ENCODE measurements at regions of chr6 and their contacts with region 1.

Region 1: GRCh38 chr6:43506667-43507471 is 3.3 kb downstream of the LRRC73 start:
- DNase-seq: peak; percentile 64 to 89 (median 80)
- ATAC-seq: peak; percentile 74
- H3K4me3 ChIP-seq: no peak overlapping the region
- H3K4me3 Mint-ChIP-seq: no peak overlapping the region
- H3K27ac ChIP-seq: no peak overlapping the region
- H3K27ac Mint-ChIP-seq: peak overlapping the region; percentile 18
- H3K4me1 ChIP-seq: peaks cover 14% of the 10 kb centered on the region
- H3K4me1 Mint-ChIP-seq: peaks cover 14% of the 10 kb centered on the region
- H3K27me3 ChIP-seq: peaks cover 0 to 13% of the 10 kb centered on the region in 2 experiments
- H3K27me3 Mint-ChIP-seq: peaks cover 16% of the 10 kb centered on the region
- CTCF ChIP-seq: peak; percentile 87

Region 2: DNA sequence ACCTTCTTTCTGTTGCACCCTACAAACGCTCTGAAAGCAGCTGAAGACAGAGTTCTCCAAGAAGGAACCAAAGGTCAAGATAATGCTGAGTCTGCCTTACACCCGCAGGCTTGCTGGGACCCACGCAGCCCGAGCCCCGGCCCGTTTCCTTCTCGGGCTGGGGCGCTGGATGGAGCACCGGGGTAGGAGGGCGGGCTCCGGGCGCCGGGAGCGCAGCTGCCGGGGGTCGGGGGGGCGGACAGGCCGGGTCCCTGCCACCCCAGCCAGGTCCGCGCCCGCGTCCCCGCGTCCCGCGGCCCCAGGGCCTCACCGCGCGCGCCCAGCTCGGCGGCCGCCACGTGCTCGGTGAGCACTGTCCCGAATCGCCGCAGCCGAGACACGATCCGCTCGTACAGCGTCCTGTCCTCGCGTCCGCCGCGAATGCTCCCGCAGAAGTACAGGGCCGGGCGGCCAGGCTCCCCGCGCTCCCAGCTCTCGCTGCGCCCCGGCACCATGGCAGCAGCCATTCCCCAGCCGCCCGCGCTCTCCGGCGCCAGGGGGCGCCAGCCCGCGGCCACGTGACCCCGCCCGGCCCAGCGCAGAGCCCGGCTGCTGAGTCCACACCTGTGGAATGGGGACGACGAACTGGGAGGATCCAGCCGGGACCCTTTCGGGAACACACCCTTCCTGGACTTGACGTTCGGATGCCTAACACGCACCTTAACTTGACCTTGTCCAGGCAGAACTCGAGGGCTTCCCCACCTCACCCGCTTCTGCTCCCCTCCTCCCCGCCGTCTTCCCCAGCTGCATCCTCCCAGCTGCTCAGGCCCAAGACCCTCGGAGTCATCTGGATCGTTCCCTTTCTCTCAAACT is 277.7 kb before region 1 on chr6 and contains the start of gene DNPH1:
- CTCF ChIA-PET with region 1: interaction called, 22 read pairs
- POLR2A ChIA-PET with region 1: interaction called, 3 read pairs
- intact Hi-C with region 1: no loop called
- DNase-seq: peak; percentile 62 to 90 (median 79)
- ATAC-seq: peak; percentile 62
- H3K4me3 ChIP-seq: peak within 1 kb of the TSS; percentile 48 to 69
- H3K4me3 Mint-ChIP-seq: peak within 1 kb of the TSS; percentile 87
- H3K27ac ChIP-seq: peak within 1 kb of the TSS; percentile 49 to 60
- H3K27ac Mint-ChIP-seq: peak within 1 kb of the TSS; percentile 94
- H3K4me1 ChIP-seq: peaks cover 43% of the 10 kb centered on the region
- H3K4me1 Mint-ChIP-seq: peaks cover 40% of the 10 kb centered on the region
- H3K27me3 ChIP-seq: no peaks in the 10 kb centered on the region
- H3K27me3 Mint-ChIP-seq: no peaks in the 10 kb centered on the region
- CTCF ChIP-seq: peak; percentile 92
- total RNA-seq, gene DNPH1: 19.6 to 26.8 TPM

Region 3: DNA sequence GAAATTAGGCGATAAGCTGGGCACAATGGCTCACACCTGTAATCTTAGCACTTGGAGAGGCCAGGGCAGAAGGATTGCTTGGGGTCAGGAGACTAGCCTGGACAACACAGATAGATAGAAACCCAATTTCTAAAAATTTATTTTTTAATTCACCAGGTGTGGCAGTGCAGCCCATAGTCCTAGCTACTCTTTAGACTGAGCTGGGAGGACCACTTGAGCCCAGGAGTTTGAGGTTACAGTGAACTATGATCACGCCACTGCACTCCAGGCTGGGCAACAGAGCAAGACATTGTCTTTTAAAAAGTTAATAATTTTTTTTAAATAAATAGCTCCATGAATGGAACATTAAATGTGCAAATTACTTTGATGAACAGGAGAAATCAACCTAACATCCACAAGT is 145.6 kb before region 1 on chr6:
- CTCF ChIA-PET with region 1: interaction called, 12 read pairs
- POLR2A ChIA-PET with region 1: no interaction called
- intact Hi-C with region 1: loop called in 1 of 2 experiments (anchors 2 kb)
- DNase-seq: peak in 1 of 9 experiments; percentile 30
- ATAC-seq: peak; percentile 48
- H3K4me3 ChIP-seq: no peak overlapping the region
- H3K4me3 Mint-ChIP-seq: no peak overlapping the region
- H3K27ac ChIP-seq: no peak overlapping the region
- H3K27ac Mint-ChIP-seq: no peak overlapping the region
- H3K4me1 ChIP-seq: peaks cover 3% of the 10 kb centered on the region
- H3K4me1 Mint-ChIP-seq: peaks cover 30% of the 10 kb centered on the region
- H3K27me3 ChIP-seq: no peaks in the 10 kb centered on the region
- H3K27me3 Mint-ChIP-seq: no peaks in the 10 kb centered on the region
- CTCF ChIP-seq: no peak

Region 4: GRCh38 chr6:43454696-43455530 is 52.0 kb before region 1 on chr6:
- CTCF ChIA-PET with region 1: interaction called, 57 read pairs
- POLR2A ChIA-PET with region 1: interaction called, 5 read pairs
- intact Hi-C with region 1: loop called (anchors 1 kb)
- DNase-seq: peak in 7 of 9 experiments; percentile 17 to 69 (median 39)
- ATAC-seq: peak; percentile 51
- H3K4me3 ChIP-seq: peak overlapping the region; percentile 57 to 73
- H3K4me3 Mint-ChIP-seq: peak overlapping the region; percentile 82
- H3K27ac ChIP-seq: no peak overlapping the region
- H3K27ac Mint-ChIP-seq: peak overlapping the region; percentile 41
- H3K4me1 ChIP-seq: peaks cover 7% of the 10 kb centered on the region
- H3K4me1 Mint-ChIP-seq: peaks cover 15% of the 10 kb centered on the region
- H3K27me3 ChIP-seq: no peaks in the 10 kb centered on the region
- H3K27me3 Mint-ChIP-seq: no peaks in the 10 kb centered on the region
- CTCF ChIP-seq: peak; percentile 41

Region 5: GRCh38 chr6:43489277-43490072 is 17.4 kb before region 1 on chr6:
- CTCF ChIA-PET with region 1: interaction called, 58 read pairs
- POLR2A ChIA-PET with region 1: no interaction called
- intact Hi-C with region 1: no loop called
- DNase-seq: no peak
- ATAC-seq: no peak
- H3K4me3 ChIP-seq: no peak overlapping the region
- H3K4me3 Mint-ChIP-seq: no peak overlapping the region
- H3K27ac ChIP-seq: no peak overlapping the region
- H3K27ac Mint-ChIP-seq: no peak overlapping the region
- H3K4me1 ChIP-seq: no peaks in the 10 kb centered on the region
- H3K4me1 Mint-ChIP-seq: peaks cover 26% of the 10 kb centered on the region
- H3K27me3 ChIP-seq: no peaks in the 10 kb centered on the region
- H3K27me3 Mint-ChIP-seq: no peaks in the 10 kb centered on the region
- CTCF ChIP-seq: no peak

Region 6: DNA sequence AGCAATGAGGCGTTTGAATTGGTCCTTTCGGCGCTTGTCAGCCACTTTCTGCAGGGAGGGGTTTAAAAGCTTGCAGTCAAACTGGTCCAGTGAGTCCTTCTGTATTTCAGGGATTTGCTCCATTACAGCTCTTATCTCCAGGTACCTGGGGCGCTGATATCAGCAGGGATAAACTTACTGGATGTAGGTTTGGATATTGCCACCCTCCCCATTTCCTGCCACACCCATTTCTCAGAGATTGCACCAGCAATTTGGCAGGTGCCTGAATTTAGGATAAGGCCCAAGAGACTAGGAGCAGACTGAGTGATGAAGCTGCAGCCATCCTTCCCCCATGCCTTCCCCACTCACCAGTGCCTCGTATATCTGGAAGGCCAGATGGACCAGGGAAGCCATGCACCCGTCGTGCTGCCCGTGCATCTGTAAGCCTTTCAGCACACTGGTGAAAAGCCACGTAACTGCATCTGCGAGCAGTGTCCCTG is 17.7 kb after region 1 on chr6:
- CTCF ChIA-PET with region 1: interaction called, 10 read pairs
- POLR2A ChIA-PET with region 1: no interaction called
- intact Hi-C with region 1: no loop called
- DNase-seq: no peak
- ATAC-seq: no peak
- H3K4me3 ChIP-seq: no peak overlapping the region
- H3K4me3 Mint-ChIP-seq: no peak overlapping the region
- H3K27ac ChIP-seq: no peak overlapping the region
- H3K27ac Mint-ChIP-seq: no peak overlapping the region
- H3K4me1 ChIP-seq: no peaks in the 10 kb centered on the region
- H3K4me1 Mint-ChIP-seq: peaks cover 2% of the 10 kb centered on the region
- H3K27me3 ChIP-seq: no peaks in the 10 kb centered on the region
- H3K27me3 Mint-ChIP-seq: no peaks in the 10 kb centered on the region
- CTCF ChIP-seq: no peak

Region 7: GRCh38 chr6:43547222-43547621 is 40.4 kb after region 1 on chr6:
- CTCF ChIA-PET with region 1: no interaction called
- POLR2A ChIA-PET with region 1: no interaction called
- intact Hi-C with region 1: no loop called
- DNase-seq: no peak
- ATAC-seq: no peak
- H3K4me3 ChIP-seq: no peak overlapping the region
- H3K4me3 Mint-ChIP-seq: no peak overlapping the region
- H3K27ac ChIP-seq: no peak overlapping the region
- H3K27ac Mint-ChIP-seq: peak overlapping the region; percentile 7
- H3K4me1 ChIP-seq: no peaks in the 10 kb centered on the region
- H3K4me1 Mint-ChIP-seq: peaks cover 2% of the 10 kb centered on the region
- H3K27me3 ChIP-seq: no peaks in the 10 kb centered on the region
- H3K27me3 Mint-ChIP-seq: no peaks in the 10 kb centered on the region
- CTCF ChIP-seq: no peak